Activated CD4-positive, alpha-beta T cell treated with anti-CD3 and anti-CD28 coated beads for 36 hours (primary cell): ENCODE measurements at regions of chr1 and their contacts with region 1.

Region 1: GRCh38 chr1:220914283-220915116 is 35.3 kb downstream of the HLX start:
- DNase-seq: no peak
- ATAC-seq: no peak
- H3K4me3 Mint-ChIP-seq: no peak overlapping the region
- H3K27ac Mint-ChIP-seq: no peak overlapping the region
- H3K4me1 Mint-ChIP-seq: no peaks in the 10 kb centered on the region
- H3K27me3 Mint-ChIP-seq: peaks cover 10% of the 10 kb centered on the region

Region 2: DNA sequence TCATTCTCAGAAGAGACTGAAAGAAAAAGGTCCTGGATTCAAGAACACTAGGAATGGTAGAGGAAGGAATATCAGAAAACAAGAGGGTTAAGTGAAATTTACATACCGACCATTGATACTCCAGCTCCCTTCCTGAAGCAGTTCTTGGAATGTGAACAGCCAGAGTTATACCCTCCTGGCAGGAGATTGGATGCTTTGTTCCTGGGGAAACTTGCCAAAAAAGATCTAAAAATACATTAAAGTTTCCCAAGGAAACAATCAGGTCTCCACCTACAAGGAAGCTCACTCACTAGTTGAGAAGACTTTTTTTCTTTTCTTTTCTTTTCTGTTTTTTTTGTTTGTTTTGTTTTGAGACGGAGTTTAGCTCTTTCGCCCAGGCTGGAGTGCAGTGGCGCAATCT is 55.8 kb after region 1 on chr1:
- CTCF ChIA-PET with region 1: no interaction called
- POLR2A ChIA-PET with region 1: no interaction called
- intact Hi-C with region 1: loop called in 1 of 2 experiments (anchors 10 kb)
- DNase-seq: no peak
- ATAC-seq: no peak
- H3K4me3 Mint-ChIP-seq: no peak overlapping the region
- H3K27ac Mint-ChIP-seq: no peak overlapping the region
- H3K4me1 Mint-ChIP-seq: no peaks in the 10 kb centered on the region
- H3K27me3 Mint-ChIP-seq: no peaks in the 10 kb centered on the region